ENCODE measurements at regions of chr5 and their contacts with region 1.

Region 1: DNA sequence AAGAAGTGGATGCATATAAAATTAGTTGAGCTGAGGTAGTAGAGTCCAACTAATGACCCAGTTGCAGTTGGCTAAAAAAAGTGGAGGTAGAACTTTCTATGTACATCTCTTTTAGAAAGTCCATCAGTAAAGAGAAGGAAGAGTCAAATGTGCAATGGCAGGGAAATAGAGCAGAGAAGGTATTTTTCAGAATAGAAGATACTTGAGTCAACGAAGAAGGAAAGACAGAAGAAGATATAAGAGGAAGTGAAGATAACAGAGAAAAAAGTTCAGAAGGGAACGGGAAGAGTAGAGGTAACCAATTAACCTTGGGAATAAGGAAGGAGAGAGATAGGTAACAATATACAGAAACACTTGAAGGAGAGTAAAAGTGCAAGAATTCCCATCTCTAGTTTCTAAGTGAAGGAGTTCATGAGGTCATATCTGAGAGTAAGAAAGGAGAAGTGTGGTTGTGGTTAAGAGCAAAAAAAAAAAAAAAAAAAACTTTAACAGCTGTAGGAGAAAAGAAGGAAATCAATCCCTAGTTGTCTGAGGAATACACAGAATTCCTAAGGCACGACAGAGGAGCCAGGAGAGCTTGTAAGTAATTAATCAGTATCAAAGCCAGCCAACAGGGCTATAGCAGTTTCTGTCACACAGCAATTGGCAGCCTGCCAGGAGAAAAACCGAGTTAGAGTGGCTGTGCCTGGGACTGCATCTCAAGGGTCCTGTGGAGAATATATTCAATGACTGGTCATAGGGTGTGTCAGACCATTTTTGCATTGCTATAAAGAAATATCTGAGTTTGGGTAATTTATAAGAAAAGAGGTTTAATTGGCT is 61.0 kb downstream of the ARL15 start:
- DNase-seq: peak; percentile 33
- ATAC-seq: no peak

Region 2: DNA sequence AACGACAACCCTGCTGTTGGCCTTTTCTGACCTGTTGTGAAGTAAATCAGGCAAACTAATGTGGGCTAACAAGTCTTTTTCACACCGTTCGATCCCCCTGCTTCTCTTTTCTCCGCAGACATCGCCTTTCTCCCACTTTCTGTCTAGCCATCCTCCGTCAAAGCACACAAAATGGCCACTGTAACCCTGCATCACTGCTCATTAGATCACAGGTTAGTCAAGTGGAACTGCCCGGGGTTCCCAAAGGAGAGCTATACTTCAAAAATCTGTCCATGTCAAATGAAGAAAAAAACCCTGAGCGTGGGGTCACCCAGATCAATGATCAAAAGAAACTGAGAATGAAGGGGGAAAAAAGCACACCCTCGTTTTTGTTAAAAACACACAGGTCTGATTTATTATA is 151.2 kb before region 1 on chr5:
- intact Hi-C with region 1: no loop called
- DNase-seq: no peak
- ATAC-seq: no peak

Region 3: DNA sequence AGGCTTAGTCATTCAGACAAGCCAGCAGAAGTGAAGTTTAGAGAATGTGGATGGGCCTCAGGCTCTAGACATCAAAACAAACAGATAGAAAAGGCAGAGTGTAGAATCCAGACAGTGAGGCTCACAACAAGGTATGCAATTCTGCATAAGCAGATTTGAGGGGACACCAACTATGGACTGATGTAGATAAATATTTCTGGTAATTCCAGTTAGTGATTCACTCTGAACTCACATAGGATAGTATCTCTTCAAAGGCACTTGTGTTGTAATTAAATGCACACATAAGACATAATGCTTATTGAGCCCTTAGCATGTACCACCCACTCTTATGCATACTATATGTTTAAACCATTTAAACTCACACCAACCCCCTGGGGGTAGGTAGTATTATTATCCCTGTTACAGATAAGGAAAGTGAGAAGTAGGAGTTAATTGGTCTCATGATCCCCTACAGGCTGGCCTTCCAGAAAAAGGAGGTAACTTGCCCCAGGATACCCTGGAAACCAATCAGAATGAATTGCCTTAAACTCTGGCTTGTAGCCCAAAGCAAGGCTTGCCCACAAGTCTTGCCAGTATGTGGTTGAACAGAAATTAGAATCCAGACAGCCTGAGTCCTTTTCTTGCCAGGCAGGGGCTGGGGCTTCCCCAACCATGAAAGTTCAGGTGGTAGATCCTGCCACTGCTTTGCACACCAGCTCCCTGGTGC is 166.6 kb after region 1 on chr5:
- intact Hi-C with region 1: loop called (anchors 5 kb)
- DNase-seq: no peak
- ATAC-seq: no peak

Measured in left ventricle myocardium superior (tissue), 1 donor.